ENCODE measurements at regions of chr1 and their contacts with region 1.

Region 1: GRCh38 chr1:226201029-226201593 is 14.6 kb upstream of the ACBD3 start:
- DNase-seq: peak; percentile 56
- ATAC-seq: peak; percentile 59
- H3K4me3 ChIP-seq: no peak overlapping the region
- H3K27ac ChIP-seq: no peak overlapping the region
- H3K4me1 ChIP-seq: no peaks in the 10 kb centered on the region
- H3K27me3 ChIP-seq: no peaks in the 10 kb centered on the region
- CTCF ChIP-seq: peak; percentile 75

Region 2: DNA sequence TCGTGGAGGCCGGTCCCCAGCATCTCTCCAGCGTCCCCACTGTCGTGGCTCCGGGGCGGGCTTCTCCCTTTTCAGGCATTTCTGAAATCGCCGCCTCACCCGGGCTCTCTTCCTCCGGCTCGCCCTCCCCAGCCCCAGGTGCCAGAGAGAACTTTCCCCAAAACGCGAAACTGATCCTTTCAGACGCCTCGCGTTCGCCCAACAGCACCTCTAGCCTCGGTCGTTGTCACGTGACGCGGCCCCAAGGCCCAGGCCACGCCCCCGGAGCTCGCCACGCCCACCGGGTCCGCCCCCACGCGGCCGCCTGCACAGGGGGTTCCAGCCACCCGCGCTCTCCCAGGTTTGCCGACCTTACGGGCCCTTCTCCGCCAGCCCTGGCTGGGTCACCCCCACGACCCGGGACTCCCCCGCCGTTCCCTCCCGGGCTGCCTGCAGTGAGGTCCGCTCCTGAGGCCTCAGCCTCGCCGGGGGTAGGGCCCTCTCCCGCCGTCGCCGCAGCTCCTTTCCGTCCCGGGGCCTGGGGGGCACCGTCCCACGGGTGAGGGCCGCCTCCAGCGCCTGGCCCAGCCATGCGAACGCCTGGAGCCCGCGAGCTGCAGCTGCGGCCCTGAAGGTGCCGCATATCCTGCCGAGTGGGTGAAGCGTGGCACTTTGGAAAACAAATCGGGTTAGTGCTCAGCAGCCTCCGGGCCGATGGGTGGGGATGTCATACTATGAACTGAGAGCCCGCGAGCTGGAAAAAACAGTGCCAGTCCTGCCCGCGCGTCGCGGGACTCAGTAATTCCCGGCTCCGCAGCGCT is 117.6 kb before region 1 on chr1:
- CTCF ChIA-PET with region 1: no interaction called
- POLR2A ChIA-PET with region 1: no interaction called
- intact Hi-C with region 1: no loop called
- DNase-seq: peak; percentile 90
- ATAC-seq: peak; percentile 89
- H3K4me3 ChIP-seq: peak overlapping the region; percentile 84
- H3K27ac ChIP-seq: peak overlapping the region; percentile 58
- H3K4me1 ChIP-seq: peaks cover 10% of the 10 kb centered on the region
- H3K27me3 ChIP-seq: no peaks in the 10 kb centered on the region
- CTCF ChIP-seq: no peak; the same call in 1 of the 2 replicates

Region 3: GRCh38 chr1:226157761-226158316 is 43.3 kb before region 1 on chr1:
- CTCF ChIA-PET with region 1: no interaction called
- POLR2A ChIA-PET with region 1: no interaction called
- intact Hi-C with region 1: no loop called
- DNase-seq: no peak
- ATAC-seq: peak; percentile 51
- H3K4me3 ChIP-seq: no peak overlapping the region
- H3K27ac ChIP-seq: no peak overlapping the region
- H3K4me1 ChIP-seq: no peaks in the 10 kb centered on the region
- H3K27me3 ChIP-seq: no peaks in the 10 kb centered on the region
- CTCF ChIP-seq: no peak

Region 4: GRCh38 chr1:226172589-226172988 is 28.5 kb before region 1 on chr1:
- CTCF ChIA-PET with region 1: no interaction called
- POLR2A ChIA-PET with region 1: no interaction called
- intact Hi-C with region 1: no loop called
- DNase-seq: no peak
- ATAC-seq: no peak
- H3K4me3 ChIP-seq: no peak overlapping the region
- H3K27ac ChIP-seq: no peak overlapping the region
- H3K4me1 ChIP-seq: no peaks in the 10 kb centered on the region
- H3K27me3 ChIP-seq: no peaks in the 10 kb centered on the region
- CTCF ChIP-seq: no peak

Region 5: DNA sequence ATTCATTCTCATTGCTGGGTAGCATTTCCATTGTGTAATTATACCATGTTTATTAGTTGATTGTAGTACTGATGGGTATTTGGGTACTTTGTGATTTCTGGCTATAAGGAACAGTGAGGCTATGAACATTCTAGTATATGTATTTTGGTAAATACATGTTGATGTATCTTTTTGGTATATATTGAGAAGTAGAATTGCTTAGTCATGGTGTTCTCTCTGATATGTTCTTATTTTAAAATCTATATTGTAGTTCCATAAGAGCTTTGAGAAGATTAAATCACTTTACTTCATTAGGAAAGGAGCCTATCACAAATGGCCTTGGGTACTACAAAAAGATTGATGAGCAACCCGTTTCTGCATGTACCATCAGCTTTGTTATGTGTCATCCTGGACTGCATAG is 35.7 kb after region 1 on chr1:
- CTCF ChIA-PET with region 1: no interaction called
- POLR2A ChIA-PET with region 1: no interaction called
- intact Hi-C with region 1: no loop called
- DNase-seq: no peak
- ATAC-seq: no peak
- H3K4me3 ChIP-seq: no peak overlapping the region
- H3K27ac ChIP-seq: no peak overlapping the region
- H3K4me1 ChIP-seq: no peaks in the 10 kb centered on the region
- H3K27me3 ChIP-seq: no peaks in the 10 kb centered on the region
- CTCF ChIP-seq: no peak

Region 6: GRCh38 chr1:226279498-226279897 is 78.4 kb after region 1 on chr1:
- CTCF ChIA-PET with region 1: interaction called, 6 read pairs
- POLR2A ChIA-PET with region 1: no interaction called
- intact Hi-C with region 1: loop called (anchors 5 kb)
- DNase-seq: no peak
- ATAC-seq: no peak
- H3K4me3 ChIP-seq: no peak overlapping the region
- H3K27ac ChIP-seq: no peak overlapping the region
- H3K4me1 ChIP-seq: peaks cover 12% of the 10 kb centered on the region
- H3K27me3 ChIP-seq: no peaks in the 10 kb centered on the region
- CTCF ChIP-seq: no peak

Region 7: DNA sequence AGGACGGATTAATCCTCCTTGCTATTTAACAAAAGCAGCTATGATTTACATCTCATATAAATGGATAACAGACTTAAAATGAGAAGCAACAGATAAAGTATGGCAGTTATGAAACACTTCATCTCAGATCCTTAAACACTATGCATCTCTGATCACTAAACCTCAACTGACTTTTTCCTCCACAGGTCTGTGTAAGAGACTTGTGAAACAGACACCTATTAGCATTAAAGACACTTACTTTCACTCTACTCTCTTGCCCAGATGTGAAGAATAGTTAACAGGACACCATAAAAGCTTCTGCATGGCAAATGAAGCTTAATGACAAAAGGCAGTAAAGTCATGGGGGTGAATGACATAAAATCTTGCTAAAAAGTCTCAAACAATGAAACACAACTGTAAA is 101.6 kb after region 1 on chr1:
- CTCF ChIA-PET with region 1: interaction called, 5 read pairs
- POLR2A ChIA-PET with region 1: interaction called, 16 read pairs
- intact Hi-C with region 1: no loop called
- DNase-seq: no peak
- ATAC-seq: no peak
- H3K4me3 ChIP-seq: no peak overlapping the region
- H3K27ac ChIP-seq: no peak overlapping the region
- H3K4me1 ChIP-seq: peaks cover 2% of the 10 kb centered on the region
- H3K27me3 ChIP-seq: no peaks in the 10 kb centered on the region
- CTCF ChIP-seq: no peak

Region 8: GRCh38 chr1:226332947-226333346 is 131.8 kb after region 1 on chr1:
- CTCF ChIA-PET with region 1: interaction called, 15 read pairs
- POLR2A ChIA-PET with region 1: no interaction called
- intact Hi-C with region 1: loop called (anchors 1 kb)
- DNase-seq: no peak
- ATAC-seq: peak; percentile 36
- H3K4me3 ChIP-seq: peak overlapping the region; percentile 61
- H3K27ac ChIP-seq: no peak overlapping the region
- H3K4me1 ChIP-seq: peaks cover 8% of the 10 kb centered on the region
- H3K27me3 ChIP-seq: no peaks in the 10 kb centered on the region
- CTCF ChIP-seq: no peak

Measured in PC-3 (cell line).